ENCODE measurements at regions of chr1 and their contacts with region 1.

Region 1: DNA sequence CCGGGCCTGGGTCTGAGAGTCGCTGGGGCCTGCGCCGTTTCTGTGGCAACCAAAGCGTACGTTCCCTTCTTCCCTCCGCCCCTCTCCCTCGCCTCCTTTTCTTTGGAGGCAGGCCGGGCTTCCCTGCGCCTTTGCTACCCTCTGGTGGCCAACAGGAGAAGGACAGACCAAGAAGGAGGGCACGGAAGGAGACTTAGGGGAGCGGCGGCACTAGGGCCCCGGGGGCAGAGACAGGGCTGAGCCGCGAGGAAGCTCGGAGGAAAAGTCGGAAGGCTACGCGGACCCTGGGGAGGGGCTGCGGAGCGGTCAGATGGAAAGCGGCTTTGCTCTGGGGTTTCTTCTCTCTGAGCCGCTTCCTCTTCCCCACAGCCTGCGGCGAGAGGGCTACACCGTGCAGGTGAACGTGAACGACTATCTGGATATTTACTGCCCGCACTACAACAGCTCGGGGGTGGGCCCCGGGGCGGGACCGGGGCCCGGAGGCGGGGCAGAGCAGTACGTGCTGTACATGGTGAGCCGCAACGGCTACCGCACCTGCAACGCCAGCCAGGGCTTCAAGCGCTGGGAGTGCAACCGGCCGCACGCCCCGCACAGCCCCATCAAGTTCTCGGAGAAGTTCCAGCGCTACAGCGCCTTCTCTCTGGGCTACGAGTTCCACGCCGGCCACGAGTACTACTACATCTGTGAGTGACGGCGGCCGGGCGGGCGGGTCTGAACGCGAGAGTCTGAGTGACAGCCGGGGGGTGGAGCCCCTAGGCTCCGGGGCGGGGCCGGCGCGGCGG is 6.3 kb downstream of the EFNA3 start:
- DNase-seq: peak; percentile 98
- H3K4me3 Mint-ChIP-seq: peak overlapping the region; percentile 100
- H3K27ac Mint-ChIP-seq: peak overlapping the region; percentile 96
- H3K4me1 Mint-ChIP-seq: peaks cover 28% of the 10 kb centered on the region
- H3K27me3 Mint-ChIP-seq: peaks cover 19% of the 10 kb centered on the region
- CTCF ChIP-seq: peak; percentile 89

Region 2: GRCh38 chr1:154479764-154480421 is 605.0 kb before region 1 on chr1:
- CTCF ChIA-PET with region 1: interaction called, 8 read pairs
- POLR2A ChIA-PET with region 1: interaction called, 7 read pairs
- intact Hi-C with region 1: loop called (anchors 1 kb)
- DNase-seq: peak; percentile 92
- H3K4me3 Mint-ChIP-seq: no peak overlapping the region
- H3K27ac Mint-ChIP-seq: no peak overlapping the region
- H3K4me1 Mint-ChIP-seq: peaks cover 23% of the 10 kb centered on the region
- H3K27me3 Mint-ChIP-seq: no peaks in the 10 kb centered on the region
- CTCF ChIP-seq: peak; percentile 98

Region 3: GRCh38 chr1:154936555-154937084 is 148.3 kb before region 1 on chr1 and contains the start of gene PMVK:
- CTCF ChIA-PET with region 1: interaction called, 7 read pairs
- POLR2A ChIA-PET with region 1: interaction called, 19 read pairs
- intact Hi-C with region 1: no loop called
- DNase-seq: peak; percentile 99
- H3K4me3 Mint-ChIP-seq: peak within 1 kb of the TSS; percentile 90
- H3K27ac Mint-ChIP-seq: peak within 1 kb of the TSS; percentile 100
- H3K4me1 Mint-ChIP-seq: peaks cover 49% of the 10 kb centered on the region
- H3K27me3 Mint-ChIP-seq: no peaks in the 10 kb centered on the region
- CTCF ChIP-seq: peak; percentile 26
- total RNA-seq, gene PMVK: 57.7 and 68.9 TPM in 2 replicates

Region 4: DNA sequence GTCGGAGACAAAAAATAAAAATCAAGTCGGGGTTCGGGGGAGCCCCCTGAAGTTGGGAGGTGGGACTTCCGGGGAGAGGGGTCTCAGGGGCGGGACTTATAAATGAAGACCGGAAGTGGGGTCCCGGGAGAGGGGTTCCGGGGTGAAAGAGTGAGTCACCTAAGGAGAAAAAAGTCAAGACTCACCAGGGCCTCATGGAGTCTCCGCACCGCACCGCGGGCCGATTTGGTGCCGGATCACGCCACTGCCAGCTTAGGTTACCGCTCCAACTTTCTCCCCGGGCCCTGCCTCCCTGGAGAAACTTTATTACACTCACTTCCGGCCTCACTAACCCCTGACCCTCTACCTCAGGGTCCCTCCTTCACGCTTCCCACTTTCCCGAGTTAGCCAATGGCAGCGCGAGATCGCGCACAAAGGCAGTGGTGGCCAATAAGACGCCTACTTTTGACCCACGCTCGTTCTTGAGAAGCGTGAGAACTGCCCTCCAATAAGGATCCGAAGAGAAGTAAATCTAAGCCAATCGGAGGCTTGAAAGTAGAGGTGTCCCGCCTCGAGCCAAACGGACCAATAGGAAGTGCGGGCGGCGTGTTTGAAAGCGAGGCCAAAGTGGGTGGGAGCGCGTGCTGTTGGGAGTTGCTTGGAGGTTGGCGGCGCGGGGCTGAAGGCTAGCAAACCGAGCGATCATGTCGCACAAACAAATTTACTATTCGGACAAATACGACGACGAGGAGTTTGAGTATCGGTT is 110.7 kb before region 1 on chr1 and contains the start of gene CKS1B:
- CTCF ChIA-PET with region 1: interaction called, 10 read pairs
- POLR2A ChIA-PET with region 1: interaction called, 35 read pairs
- intact Hi-C with region 1: loop called (anchors 1 kb)
- DNase-seq: peak; percentile 100
- H3K4me3 Mint-ChIP-seq: no peak within 1 kb of the TSS
- H3K27ac Mint-ChIP-seq: no peak within 1 kb of the TSS
- H3K4me1 Mint-ChIP-seq: peaks cover 32% of the 10 kb centered on the region
- H3K27me3 Mint-ChIP-seq: no peaks in the 10 kb centered on the region
- CTCF ChIP-seq: no peak
- total RNA-seq, gene CKS1B: 285 and 289 TPM in 2 replicates

Region 5: GRCh38 chr1:155038602-155039307 is 46.2 kb before region 1 on chr1:
- CTCF ChIA-PET with region 1: interaction called, 68 read pairs
- POLR2A ChIA-PET with region 1: interaction called, 14 read pairs
- intact Hi-C with region 1: no loop called
- DNase-seq: peak; percentile 97
- H3K4me3 Mint-ChIP-seq: peak overlapping the region; percentile 15
- H3K27ac Mint-ChIP-seq: peak overlapping the region; percentile 79
- H3K4me1 Mint-ChIP-seq: peaks cover 37% of the 10 kb centered on the region
- H3K27me3 Mint-ChIP-seq: no peaks in the 10 kb centered on the region
- CTCF ChIP-seq: no peak

Region 6: DNA sequence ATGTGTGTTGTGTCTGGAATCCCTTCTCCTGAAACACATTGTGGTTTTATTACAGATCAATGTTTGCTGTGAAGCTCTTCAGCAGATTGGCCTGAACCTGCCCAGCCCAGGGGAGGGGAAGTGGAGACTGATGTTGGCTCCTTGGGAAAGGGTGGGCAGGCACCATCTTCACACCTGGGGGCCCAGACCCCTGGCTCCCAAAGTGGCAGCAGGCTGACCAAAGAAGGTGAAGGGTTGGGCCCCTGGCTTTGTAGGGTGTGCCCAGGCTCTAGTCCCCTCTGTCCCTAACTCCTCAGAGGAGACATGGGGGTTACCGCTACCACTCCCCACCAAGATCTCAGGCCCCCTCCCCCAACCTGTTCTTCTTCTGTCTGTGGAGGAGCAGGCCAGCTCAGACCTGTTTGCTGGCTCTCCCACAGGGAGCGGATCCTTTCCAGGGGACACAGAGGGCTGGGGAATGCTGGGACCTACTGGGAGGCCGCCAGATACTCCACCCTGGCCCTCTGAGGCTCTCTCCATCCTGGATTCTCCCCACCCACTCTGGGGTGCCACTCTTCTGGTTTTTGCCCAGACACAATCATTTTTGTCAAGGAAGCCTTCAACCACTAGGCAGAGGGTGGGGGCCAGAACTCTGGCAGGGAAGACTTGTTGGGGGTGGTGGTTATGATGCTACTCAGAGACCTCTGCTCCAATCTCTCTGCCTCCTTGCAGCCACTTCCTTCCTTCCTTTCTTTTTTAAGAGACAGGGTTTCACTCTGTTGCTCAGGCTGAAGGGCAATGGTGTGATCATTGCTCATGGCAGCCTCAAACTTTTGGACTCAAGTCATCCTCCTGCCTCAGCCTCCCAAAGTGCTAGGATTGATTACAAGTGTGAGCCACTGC is 11.3 kb before region 1 on chr1:
- CTCF ChIA-PET with region 1: interaction called, 37 read pairs
- POLR2A ChIA-PET with region 1: interaction called, 6 read pairs
- intact Hi-C with region 1: no loop called
- DNase-seq: no peak
- H3K4me3 Mint-ChIP-seq: no peak overlapping the region
- H3K27ac Mint-ChIP-seq: no peak overlapping the region
- H3K4me1 Mint-ChIP-seq: peaks cover 18% of the 10 kb centered on the region
- H3K27me3 Mint-ChIP-seq: no peaks in the 10 kb centered on the region
- CTCF ChIP-seq: no peak

Region 7: GRCh38 chr1:155135415-155136028 is 50.6 kb after region 1 on chr1 and contains the start of gene SLC50A1:
- CTCF ChIA-PET with region 1: interaction called, 161 read pairs
- POLR2A ChIA-PET with region 1: interaction called, 35 read pairs
- intact Hi-C with region 1: no loop called
- DNase-seq: peak; percentile 94
- H3K4me3 Mint-ChIP-seq: peak within 1 kb of the TSS; percentile 80
- H3K27ac Mint-ChIP-seq: peak within 1 kb of the TSS; percentile 94
- H3K4me1 Mint-ChIP-seq: peaks cover 50% of the 10 kb centered on the region
- H3K27me3 Mint-ChIP-seq: no peaks in the 10 kb centered on the region
- CTCF ChIP-seq: no peak
- total RNA-seq, gene SLC50A1: 91.2 and 97.8 TPM in 2 replicates

Region 8: GRCh38 chr1:155255243-155256007 is 170.5 kb after region 1 on chr1 and contains the start of gene ENTREP3:
- CTCF ChIA-PET with region 1: no interaction called
- POLR2A ChIA-PET with region 1: no interaction called
- intact Hi-C with region 1: no loop called
- DNase-seq: peak; percentile 81
- H3K4me3 Mint-ChIP-seq: peak within 1 kb of the TSS; percentile 84
- H3K27ac Mint-ChIP-seq: peak within 1 kb of the TSS; percentile 83
- H3K4me1 Mint-ChIP-seq: peaks cover 32% of the 10 kb centered on the region
- H3K27me3 Mint-ChIP-seq: no peaks in the 10 kb centered on the region
- CTCF ChIP-seq: no peak
- total RNA-seq, gene ENTREP3: 32.3 and 37.1 TPM in 2 replicates

Region 9: DNA sequence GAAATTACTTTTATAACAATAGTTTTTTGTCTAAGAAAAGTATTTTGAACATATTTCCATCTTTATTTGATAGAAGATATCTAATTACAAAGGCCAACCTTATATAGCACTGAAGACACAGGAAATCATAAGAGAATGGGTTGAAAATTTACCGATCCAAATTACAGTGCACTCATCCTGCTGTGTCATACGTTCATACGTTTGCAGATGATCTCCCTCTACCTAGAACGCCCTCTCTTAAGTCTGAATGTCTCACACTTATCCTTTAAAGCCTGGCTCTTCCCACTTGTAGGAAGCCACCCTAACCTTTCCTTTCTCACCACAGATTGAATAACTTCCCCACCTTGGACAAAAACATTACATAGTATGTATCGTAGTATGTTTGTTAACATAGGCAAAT is 468.4 kb after region 1 on chr1:
- CTCF ChIA-PET with region 1: no interaction called
- POLR2A ChIA-PET with region 1: no interaction called
- intact Hi-C with region 1: no loop called
- DNase-seq: no peak
- H3K4me3 Mint-ChIP-seq: no peak overlapping the region
- H3K27ac Mint-ChIP-seq: no peak overlapping the region
- H3K4me1 Mint-ChIP-seq: peaks cover 6% of the 10 kb centered on the region
- H3K27me3 Mint-ChIP-seq: no peaks in the 10 kb centered on the region
- CTCF ChIP-seq: no peak